Left cardiac atrium (tissue), 4 donors: ENCODE measurements at regions of chr10 and their contacts with region 1.

Region 1: GRCh38 chr10:95363303-95363912 is 72.6 kb upstream of the PDLIM1 start:
- DNase-seq: no peak
- ATAC-seq: peak; percentile 31 to 36

Region 2: DNA sequence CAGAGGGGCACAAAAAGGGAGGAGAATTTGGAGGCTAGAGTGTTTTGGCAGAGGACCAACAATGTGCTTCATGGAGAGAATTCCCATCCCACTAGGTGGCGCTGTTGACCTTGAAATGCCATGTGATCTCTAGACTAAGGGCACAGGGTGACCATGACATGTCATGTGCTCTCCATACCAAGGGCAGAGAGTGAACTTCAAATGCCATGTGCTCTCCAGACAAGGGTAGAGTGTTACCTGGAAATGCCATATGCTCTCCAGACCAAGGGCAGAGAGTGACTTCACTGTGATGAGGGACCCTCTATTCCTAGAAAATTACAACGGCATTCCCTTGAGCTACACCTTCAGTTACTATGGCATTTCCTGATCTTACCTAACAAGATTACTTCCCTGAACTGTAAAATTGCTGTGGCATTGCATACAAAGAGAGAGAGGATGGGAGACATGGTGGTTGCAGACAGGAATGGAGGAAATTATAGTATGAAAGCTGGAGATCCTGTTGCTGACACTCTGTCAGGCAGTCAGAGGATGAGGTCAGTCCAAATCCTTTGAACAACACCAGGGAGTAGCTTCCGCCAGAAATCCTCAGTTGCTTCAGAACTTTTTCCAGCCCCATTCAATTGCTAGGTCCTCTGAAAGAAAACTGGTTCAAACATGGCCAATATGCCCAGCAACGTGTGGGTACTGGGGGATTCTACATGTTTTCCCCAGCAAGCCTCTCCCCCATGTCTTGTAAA is 230.2 kb before region 1 on chr10:
- intact Hi-C with region 1: loop called in 1 of 2 experiments (anchors 5 kb)
- DNase-seq: peak; percentile 74
- ATAC-seq: peak in 1 of 2 donors; percentile 47

Region 3: GRCh38 chr10:95183271-95184230 is 179.9 kb before region 1 on chr10:
- intact Hi-C with region 1: loop called (anchors 10 kb)
- DNase-seq: peak; percentile 90
- ATAC-seq: peak; percentile 98 to 99

Region 4: DNA sequence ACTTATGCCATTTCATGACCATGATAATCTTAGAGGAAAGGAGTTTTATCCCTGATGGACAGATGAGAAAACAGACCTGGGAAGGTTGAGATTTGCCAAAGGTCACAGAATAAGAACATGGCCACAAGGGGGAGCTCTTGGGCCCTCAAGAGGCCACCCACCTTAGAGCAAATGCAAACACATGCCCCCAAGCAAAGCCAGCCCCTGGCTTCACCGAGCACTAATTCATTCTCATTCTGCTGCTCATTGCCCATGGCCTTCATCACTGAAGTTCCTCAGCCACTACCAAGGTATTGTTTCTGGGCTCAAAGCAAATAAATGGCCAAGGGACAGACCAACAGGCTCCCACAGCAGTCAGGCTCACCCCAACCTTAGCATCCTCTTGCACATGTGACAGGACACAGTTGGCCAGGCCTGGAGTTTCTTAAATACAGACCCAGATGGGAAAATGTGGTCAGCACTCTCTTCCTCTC is 116.8 kb before region 1 on chr10:
- intact Hi-C with region 1: loop called (anchors 2 to 10 kb)
- DNase-seq: peak; percentile 84
- ATAC-seq: peak; percentile 45 to 60

Region 5: DNA sequence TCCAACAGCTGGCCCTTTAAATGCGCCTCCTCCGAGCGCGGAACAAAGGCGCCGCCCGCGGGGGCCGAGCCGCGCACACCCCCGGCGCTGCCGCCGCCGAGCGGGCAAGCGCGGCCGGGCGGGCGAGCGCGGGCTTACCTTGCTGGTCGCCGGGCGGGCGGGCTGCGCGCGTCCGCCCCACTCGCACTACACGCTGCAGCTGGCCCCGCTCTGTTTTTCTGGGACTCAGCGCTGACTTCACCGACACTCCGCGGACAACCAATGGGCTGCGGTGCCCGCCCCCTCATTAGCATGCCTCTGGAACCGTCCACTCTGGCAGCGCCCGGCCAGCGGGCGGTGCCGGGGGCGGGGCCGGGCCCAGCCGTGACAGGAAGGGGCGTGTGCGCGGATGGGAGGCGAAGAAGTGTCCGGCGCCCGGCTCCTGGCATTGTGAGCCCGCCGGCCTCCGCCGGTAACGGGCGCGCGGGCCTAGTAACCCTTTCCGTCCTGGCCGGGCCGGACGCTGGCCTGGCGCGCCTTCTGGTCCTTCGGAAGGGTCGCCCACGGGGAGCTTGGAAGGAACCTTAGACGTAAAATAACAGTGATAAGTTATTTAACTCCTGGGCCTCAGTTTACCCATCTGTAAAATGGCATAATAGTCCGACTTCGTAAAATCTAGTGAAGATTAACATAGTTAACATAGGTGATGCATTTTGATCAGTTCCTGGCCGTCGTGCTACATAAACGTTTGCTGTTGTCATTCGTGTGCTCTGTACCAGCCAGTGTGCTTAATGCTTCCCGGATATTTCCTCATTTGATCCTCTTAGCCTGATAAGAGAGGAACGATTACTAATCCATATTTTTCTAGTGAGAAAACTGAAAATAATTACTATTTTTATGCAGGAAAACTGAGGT is 198.0 kb after region 1 on chr10 and contains the start of gene SORBS1:
- intact Hi-C with region 1: no loop called
- DNase-seq: peak; percentile 97
- ATAC-seq: peak; percentile 99
- total RNA-seq, gene SORBS1: 465 to 617 TPM